Endothelial cell of umbilical vein (primary cell): ENCODE measurements at regions of chr14 and their contacts with region 1.

Region 1: DNA sequence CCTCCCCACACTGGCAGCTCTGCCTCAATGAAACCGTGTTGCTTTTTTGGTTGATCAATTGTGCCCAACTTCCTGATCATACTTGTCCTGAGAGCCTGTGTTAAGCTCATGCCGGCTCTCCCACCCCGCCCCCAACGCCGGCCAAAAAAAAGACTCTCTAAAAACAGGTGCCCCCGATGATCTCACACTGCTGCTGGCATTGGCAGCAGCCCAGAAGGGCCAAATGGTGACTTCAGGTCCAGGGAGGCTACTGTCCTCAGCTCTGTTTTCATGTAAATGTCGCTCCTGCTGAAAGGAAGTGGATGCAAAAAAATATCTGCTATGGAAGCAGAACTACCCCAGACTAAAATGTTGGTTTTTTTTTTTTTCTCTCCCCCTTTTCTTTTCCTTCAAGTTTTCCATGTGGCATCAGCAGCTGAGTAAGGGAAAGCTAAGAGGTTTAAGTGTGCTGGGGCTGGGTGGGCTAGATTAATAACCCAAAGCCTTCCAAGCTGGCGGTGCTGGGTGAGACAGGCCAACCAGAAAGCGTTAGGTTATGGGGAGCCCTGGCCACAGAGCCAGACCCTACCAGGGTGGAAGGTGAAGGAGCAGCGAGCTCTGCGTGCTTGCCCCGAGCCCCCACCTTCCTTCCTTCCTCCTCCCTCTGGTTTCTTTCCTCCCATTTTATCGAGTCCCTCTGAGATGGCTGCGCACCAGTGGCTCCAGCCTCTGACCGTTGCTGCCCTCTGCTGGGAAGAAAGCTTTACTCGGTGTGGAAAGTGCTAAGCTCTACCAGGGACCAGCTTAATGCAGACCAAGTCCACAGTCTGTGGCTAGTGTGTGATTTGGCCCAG is 396.1 kb downstream of the NRXN3 start:
- DNase-seq: peak; percentile 82
- H3K4me3 ChIP-seq: no peak overlapping the region
- H3K27ac ChIP-seq: no peak overlapping the region
- H3K4me1 ChIP-seq: peaks cover 10% of the 10 kb centered on the region
- H3K27me3 ChIP-seq: no peaks in the 10 kb centered on the region
- CTCF ChIP-seq: peak; percentile 78 to 88
- POLR2A ChIP-seq: no peak

Region 2: DNA sequence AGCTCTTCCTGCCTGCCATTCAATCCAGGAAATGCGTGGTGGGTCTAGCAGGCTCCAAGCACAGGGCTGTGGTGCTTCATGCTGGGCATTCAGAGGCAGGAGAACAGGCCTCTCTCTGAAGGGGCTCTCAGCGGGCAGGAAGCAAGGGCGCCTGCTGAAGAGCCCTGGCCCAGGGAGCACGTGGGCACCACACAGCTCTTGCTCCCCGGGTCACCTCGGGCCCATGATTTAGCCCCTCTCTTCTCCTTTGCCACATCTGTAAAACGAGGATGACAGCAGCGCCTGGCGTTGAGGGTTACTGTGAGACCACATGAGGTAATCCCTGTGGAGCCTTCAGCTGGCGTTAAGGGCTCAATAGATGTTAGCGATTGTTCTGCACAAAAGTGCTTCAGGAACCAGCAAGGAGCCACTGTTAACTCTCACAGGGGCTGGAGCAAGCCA is 912.2 kb before region 1 on chr14:
- CTCF ChIA-PET with region 1: interaction called, 36 read pairs
- POLR2A ChIA-PET with region 1: no interaction called
- dilution Hi-C with region 1: no loop called
- intact Hi-C with region 1: no loop called
- DNase-seq: no peak
- H3K4me3 ChIP-seq: no peak overlapping the region
- H3K27ac ChIP-seq: no peak overlapping the region
- H3K4me1 ChIP-seq: peaks cover 7% of the 10 kb centered on the region
- H3K27me3 ChIP-seq: no peaks in the 10 kb centered on the region
- CTCF ChIP-seq: no peak
- POLR2A ChIP-seq: no peak

Region 3: DNA sequence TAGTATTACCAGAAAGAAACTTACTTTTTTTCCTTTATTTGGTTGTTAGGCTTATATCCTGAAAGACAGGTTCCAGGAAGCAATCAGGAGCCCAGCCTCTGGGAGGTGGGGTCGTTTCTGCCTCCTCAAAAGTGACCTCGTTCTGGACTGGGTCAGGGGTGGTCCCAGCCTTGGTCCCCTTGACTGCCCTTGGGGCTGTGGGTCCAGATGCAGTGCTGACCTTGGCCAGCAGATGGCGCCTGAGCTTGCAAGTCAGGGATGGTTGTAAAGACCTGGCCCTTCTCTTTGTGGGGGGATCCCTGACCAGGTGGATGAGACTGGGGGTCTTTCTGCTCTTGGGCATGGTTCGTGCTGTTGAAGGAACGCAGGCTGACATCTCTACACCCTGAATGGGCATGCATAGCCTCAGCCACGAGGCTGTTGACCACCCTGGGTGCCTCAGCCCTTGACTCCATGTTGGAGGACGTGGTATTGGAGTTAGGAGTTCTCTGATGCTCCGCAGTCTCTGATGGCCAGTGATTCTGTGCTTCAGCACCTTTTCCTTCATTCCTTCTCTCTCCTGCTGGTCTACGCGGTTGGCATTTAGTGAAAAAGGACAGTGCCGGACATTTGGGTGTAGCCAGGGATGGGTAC is 704.0 kb before region 1 on chr14:
- CTCF ChIA-PET with region 1: interaction called, 110 read pairs
- POLR2A ChIA-PET with region 1: no interaction called
- dilution Hi-C with region 1: no loop called
- intact Hi-C with region 1: loop called (anchors 1 kb)
- DNase-seq: peak; percentile 57
- H3K4me3 ChIP-seq: no peak overlapping the region
- H3K27ac ChIP-seq: no peak overlapping the region
- H3K4me1 ChIP-seq: no peaks in the 10 kb centered on the region
- H3K27me3 ChIP-seq: no peaks in the 10 kb centered on the region
- CTCF ChIP-seq: peak; percentile 97 to 99
- POLR2A ChIP-seq: no peak

Region 4: GRCh38 chr14:78448164-78449094 is 117.8 kb before region 1 on chr14:
- CTCF ChIA-PET with region 1: interaction called, 31 read pairs
- POLR2A ChIA-PET with region 1: no interaction called
- dilution Hi-C with region 1: no loop called
- intact Hi-C with region 1: loop called (anchors 1 kb)
- DNase-seq: peak; percentile 47
- H3K4me3 ChIP-seq: no peak overlapping the region
- H3K27ac ChIP-seq: no peak overlapping the region
- H3K4me1 ChIP-seq: no peaks in the 10 kb centered on the region
- H3K27me3 ChIP-seq: no peaks in the 10 kb centered on the region
- CTCF ChIP-seq: peak; percentile 63 to 66
- POLR2A ChIP-seq: no peak

Region 5: GRCh38 chr14:78598041-78598920 is 32.0 kb after region 1 on chr14:
- CTCF ChIA-PET with region 1: interaction called, 30 read pairs
- POLR2A ChIA-PET with region 1: no interaction called
- dilution Hi-C with region 1: no loop called
- intact Hi-C with region 1: no loop called
- DNase-seq: peak; percentile 58
- H3K4me3 ChIP-seq: no peak overlapping the region
- H3K27ac ChIP-seq: no peak overlapping the region
- H3K4me1 ChIP-seq: no peaks in the 10 kb centered on the region
- H3K27me3 ChIP-seq: peaks cover 4 to 9% of the 10 kb centered on the region in 2 experiments
- CTCF ChIP-seq: peak; percentile 87 to 96
- POLR2A ChIP-seq: no peak

Region 6: GRCh38 chr14:78697341-78697740 is 131.1 kb after region 1 on chr14:
- CTCF ChIA-PET with region 1: interaction called, 7 read pairs
- POLR2A ChIA-PET with region 1: no interaction called
- dilution Hi-C with region 1: no loop called
- intact Hi-C with region 1: loop called (anchors 2 kb)
- DNase-seq: peak; percentile 46
- H3K4me3 ChIP-seq: no peak overlapping the region
- H3K27ac ChIP-seq: no peak overlapping the region
- H3K4me1 ChIP-seq: no peaks in the 10 kb centered on the region
- H3K27me3 ChIP-seq: no peaks in the 10 kb centered on the region
- CTCF ChIP-seq: peak; percentile 11 to 35
- POLR2A ChIP-seq: no peak